Head of caudate nucleus (tissue), 42 donors: ENCODE measurements at regions of chr6 and their contacts with region 1.

Region 1: GRCh38 chr6:31829633-31830283 is 2.2 kb downstream of the HSPA1B start:
- DNase-seq: peak in 15 of 42 donors; percentile 24 to 78 (median 37)

Region 2: DNA sequence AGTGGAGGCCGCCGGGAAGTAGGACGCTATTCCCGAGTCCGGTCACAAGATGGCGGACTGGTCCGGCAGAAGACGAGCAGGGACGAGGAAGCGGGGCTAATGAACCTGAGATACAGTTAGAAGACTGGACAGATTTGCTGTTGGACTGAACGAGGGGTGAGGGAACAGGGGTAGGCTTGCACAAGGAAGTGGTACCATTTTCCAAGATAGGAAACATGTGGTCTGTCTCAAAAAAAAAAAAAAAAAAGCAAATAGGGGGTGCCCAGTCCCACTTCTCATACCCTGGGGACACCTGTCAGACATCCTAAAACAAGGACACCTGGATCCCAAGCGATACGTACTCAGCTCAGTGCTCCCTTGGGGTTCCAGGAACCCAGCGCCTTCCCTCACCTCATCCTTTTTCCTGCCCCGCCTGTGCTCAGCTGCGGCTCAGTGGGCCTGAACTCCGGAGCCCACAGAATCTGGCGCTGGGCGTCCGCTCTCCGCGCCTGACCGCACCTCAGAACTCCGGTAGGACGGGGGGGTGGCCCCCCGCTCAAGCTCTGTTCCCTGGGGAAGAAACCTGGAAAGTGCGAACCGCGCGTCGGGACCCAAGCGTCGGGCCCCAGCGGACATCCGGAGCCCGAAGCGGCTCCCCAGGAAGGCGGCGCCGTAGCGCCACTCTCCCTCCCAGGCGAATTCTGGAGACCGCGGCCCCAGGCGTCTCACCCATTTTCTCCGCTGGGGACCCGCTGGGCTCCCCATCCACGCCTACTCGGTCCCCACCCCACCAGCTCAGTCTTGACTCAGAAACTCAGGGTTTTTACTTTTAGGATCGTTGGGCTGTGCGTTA is 148.7 kb before region 1 on chr6 and contains the start of gene LY6G5C:
- intact Hi-C with region 1: loop called (anchors 2 kb)
- DNase-seq: peak; percentile 69 to 93 (median 82)

Region 3: DNA sequence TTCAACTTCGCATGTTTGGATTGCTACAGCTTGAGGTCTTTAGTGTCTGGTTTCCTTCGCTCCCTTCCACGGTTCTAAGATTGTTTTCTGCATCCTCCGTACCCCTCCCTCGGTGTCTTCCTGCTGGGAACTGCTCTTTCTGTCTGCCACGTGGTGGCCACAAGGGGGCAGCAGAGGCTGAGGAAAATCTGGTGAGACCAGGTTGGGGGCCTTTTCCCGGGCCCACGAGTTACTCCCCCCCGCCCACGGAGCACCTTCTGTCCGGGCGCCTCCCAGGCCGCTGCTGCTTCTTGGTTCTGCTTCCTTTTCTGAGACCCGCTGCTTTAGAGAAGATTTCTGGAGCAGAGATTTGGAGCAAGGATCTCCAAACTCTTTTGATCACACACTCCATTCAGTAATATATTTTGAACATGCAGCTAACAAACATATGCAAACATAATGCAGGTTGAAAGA is 415.2 kb after region 1 on chr6:
- intact Hi-C with region 1: no loop called
- DNase-seq: peak; percentile 61 to 93 (median 84)